Mammary epithelial cell (primary cell): ENCODE measurements at regions of chr5 and their contacts with region 1.

Region 1: DNA sequence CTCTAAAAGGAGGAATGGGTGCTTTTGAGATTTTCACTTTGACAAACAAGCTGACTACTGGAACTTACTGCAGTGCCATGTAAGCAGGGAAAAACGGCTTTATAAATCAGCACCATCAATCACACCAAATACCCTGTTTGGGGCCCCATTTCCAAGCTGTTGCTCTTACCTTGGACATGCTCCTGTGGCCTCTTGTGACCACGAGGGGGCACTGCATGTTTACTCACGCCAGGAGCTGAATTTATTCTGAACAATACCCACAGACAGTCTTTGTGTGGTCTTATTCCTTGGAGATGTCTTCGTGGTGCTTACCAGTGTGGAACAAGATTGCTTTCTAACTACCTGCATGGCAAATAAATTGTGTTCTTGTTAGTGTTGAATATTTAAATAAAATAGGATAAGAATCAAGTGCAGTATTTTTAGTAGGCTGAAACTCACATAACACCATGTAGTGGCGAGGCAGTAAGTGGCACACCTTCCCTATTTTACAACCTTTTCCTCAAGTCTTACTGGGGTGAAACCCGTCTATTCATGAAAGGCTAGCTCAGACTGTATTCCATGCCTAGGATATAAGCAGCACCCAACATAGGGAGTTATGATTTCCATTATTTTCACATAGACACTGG is 155.5 kb upstream of the NMUR2 start:
- DNase-seq: peak; percentile 37
- H3K4me3 ChIP-seq: no peak overlapping the region
- H3K27ac ChIP-seq: no peak overlapping the region
- H3K4me1 ChIP-seq: no peaks in the 10 kb centered on the region
- H3K27me3 ChIP-seq: no peaks in the 10 kb centered on the region
- CTCF ChIP-seq: peak; percentile 91 to 94

Region 2: DNA sequence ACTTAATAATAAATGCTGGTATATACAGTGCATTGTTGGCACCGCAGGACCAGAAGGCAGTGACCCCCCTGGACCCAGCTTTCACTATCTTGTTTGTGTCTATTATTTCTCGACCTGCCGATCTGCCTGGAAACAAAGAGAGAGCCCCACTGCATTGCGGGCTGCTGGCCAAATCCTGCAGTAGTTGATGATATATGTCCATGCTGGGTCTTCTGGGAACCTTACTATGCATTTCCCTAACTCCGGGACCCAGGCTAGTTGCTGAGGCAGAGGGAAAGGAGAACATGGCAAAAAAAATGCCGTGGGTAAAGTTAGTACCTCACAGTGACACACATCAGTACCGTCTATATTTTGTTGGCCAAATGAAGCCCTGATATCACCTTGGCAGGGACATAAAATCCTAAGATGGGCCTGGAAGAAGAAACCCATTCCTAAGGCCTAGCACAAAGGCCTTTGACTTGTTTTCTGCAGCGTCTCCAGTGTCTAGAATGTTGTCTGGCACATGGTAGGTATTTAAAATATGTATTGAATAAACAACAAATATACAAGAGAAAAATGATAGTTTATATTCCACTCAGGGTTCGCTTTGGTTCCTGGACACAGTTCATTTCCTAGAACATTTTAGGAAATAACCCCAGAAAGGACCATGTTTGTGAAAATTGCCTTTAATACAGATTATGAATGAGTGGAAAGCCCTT is 201.6 kb before region 1 on chr5:
- CTCF ChIA-PET with region 1: no interaction called
- dilution Hi-C with region 1: no loop called
- in situ Hi-C with region 1: no loop called
- intact Hi-C with region 1: no loop called
- DNase-seq: no peak
- H3K4me3 ChIP-seq: no peak overlapping the region
- H3K27ac ChIP-seq: no peak overlapping the region
- H3K4me1 ChIP-seq: no peaks in the 10 kb centered on the region
- H3K27me3 ChIP-seq: no peaks in the 10 kb centered on the region
- CTCF ChIP-seq: no peak

Region 3: GRCh38 chr5:152532714-152533113 is 27.9 kb before region 1 on chr5:
- CTCF ChIA-PET with region 1: no interaction called
- dilution Hi-C with region 1: no loop called
- in situ Hi-C with region 1: no loop called
- intact Hi-C with region 1: no loop called
- DNase-seq: peak; percentile 45
- H3K4me3 ChIP-seq: no peak overlapping the region
- H3K27ac ChIP-seq: no peak overlapping the region
- H3K4me1 ChIP-seq: no peaks in the 10 kb centered on the region
- H3K27me3 ChIP-seq: no peaks in the 10 kb centered on the region
- CTCF ChIP-seq: peak; percentile 35 to 53

Region 4: DNA sequence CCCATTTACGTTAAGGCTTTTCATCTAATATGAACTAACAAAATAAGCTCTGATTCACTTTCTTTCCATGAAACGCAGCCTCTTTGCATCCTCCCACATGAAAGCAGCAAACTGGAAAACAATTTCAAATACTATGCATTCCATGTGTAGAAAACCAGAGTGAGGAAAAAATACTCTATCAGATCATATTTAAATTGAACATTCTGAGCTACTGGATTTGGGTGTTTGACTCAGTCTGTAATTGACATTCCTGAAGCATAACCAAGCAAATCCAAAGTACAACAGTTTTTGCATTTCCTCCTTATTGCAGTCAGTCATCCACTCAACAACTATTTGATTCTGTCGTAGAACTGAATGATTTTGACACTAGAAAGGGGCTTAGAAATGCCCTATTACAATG is 243.6 kb after region 1 on chr5:
- CTCF ChIA-PET with region 1: no interaction called
- dilution Hi-C with region 1: loop called (anchors 25 kb)
- in situ Hi-C with region 1: no loop called
- intact Hi-C with region 1: no loop called
- DNase-seq: no peak
- H3K4me3 ChIP-seq: no peak overlapping the region
- H3K27ac ChIP-seq: no peak overlapping the region
- H3K4me1 ChIP-seq: no peaks in the 10 kb centered on the region
- H3K27me3 ChIP-seq: no peaks in the 10 kb centered on the region
- CTCF ChIP-seq: no peak

Region 5: GRCh38 chr5:153147891-153148623 is 587.4 kb after region 1 on chr5:
- CTCF ChIA-PET with region 1: interaction called, 9 read pairs
- dilution Hi-C with region 1: no loop called
- in situ Hi-C with region 1: loop called (anchors 25 kb)
- intact Hi-C with region 1: loop called (anchors 1 kb)
- DNase-seq: peak; percentile 78
- H3K4me3 ChIP-seq: no peak overlapping the region
- H3K27ac ChIP-seq: no peak overlapping the region
- H3K4me1 ChIP-seq: peaks cover 6% of the 10 kb centered on the region
- H3K27me3 ChIP-seq: no peaks in the 10 kb centered on the region
- CTCF ChIP-seq: peak; percentile 54 to 85

Region 6: GRCh38 chr5:153402550-153402949 is 841.9 kb after region 1 on chr5:
- CTCF ChIA-PET with region 1: no interaction called
- dilution Hi-C with region 1: no loop called
- in situ Hi-C with region 1: loop called in 1 of 2 experiments (anchors 25 kb)
- intact Hi-C with region 1: no loop called
- DNase-seq: no peak
- H3K4me3 ChIP-seq: no peak overlapping the region
- H3K27ac ChIP-seq: no peak overlapping the region
- H3K4me1 ChIP-seq: peaks cover 4% of the 10 kb centered on the region
- H3K27me3 ChIP-seq: no peaks in the 10 kb centered on the region
- CTCF ChIP-seq: no peak

Region 7: DNA sequence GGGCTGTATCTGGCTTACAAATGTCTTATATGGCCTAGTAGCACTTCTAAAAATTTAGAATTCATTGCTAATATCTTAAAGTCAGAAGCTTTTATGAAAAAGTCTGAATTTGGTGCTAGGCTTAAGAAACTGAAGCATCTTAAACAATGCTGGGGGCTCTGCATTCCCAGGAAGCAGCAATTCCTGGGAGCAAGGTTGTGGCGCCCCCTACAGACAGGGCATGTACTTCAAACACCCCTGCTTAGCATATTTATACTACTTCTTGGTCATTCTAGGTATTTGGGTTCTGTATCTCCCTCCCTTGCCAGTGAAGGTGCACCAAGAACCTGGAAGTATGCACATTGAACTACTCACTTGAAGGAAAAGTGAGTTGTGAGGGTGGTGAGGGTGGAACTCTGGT is 865.3 kb after region 1 on chr5:
- CTCF ChIA-PET with region 1: no interaction called
- dilution Hi-C with region 1: no loop called
- in situ Hi-C with region 1: loop called in 1 of 2 experiments (anchors 25 kb)
- intact Hi-C with region 1: loop called (anchors 1 kb)
- DNase-seq: peak; percentile 11
- H3K4me3 ChIP-seq: no peak overlapping the region
- H3K27ac ChIP-seq: no peak overlapping the region
- H3K4me1 ChIP-seq: no peaks in the 10 kb centered on the region
- H3K27me3 ChIP-seq: peaks cover 2% of the 10 kb centered on the region
- CTCF ChIP-seq: peak; percentile 79 to 81

Region 8: DNA sequence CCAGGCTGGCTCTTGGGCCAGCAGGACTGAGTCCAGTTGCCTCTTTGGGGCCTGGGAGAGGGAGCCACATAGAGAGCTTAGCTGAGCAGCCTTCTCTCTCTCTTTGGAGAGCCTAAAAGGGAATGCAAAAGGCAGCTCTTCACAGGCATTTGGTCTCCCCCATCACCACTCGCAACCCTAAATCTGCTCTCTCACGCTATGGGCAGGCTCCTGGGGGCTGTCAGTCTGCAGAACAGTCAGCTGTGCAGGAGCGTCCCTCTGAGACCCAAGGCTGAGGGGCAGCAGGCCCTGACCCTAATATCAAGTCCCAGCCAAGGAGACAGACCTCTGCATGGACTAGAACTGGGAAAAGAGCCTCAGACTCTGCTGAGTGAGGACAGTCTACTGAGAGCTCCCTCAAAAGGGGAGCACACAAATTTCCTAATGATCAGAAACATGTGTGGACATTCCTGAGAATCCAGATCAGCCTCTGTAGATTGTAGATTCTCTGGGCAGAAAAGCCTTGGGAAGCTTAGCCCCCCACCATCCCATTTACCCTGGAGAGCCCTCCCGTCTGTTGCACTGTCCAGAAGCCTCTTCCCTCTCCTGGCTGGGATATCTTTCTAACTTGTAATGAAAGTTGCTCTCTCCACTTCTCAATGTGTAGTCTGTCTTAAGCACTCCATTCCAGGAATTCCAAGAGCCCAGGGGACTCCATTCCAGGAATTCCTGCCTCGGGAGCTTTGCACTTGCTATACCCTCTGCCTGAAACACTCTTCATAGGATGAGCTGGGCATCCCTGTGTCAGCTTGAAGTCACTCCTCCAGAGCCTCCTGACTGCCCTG is 1398.7 kb after region 1 on chr5:
- CTCF ChIA-PET with region 1: no interaction called
- dilution Hi-C with region 1: no loop called
- in situ Hi-C with region 1: loop called in 1 of 2 experiments (anchors 10 kb)
- intact Hi-C with region 1: loop called (anchors 10 kb)
- DNase-seq: no peak
- H3K4me3 ChIP-seq: no peak overlapping the region
- H3K27ac ChIP-seq: no peak overlapping the region
- H3K4me1 ChIP-seq: peaks cover 7% of the 10 kb centered on the region
- H3K27me3 ChIP-seq: no peaks in the 10 kb centered on the region
- CTCF ChIP-seq: no peak